Calu3 (cell line): ENCODE measurements at regions of chr20 and their contacts with region 1.

Region 1: GRCh38 chr20:61138566-61138965 is 113.5 kb upstream of the CDH4 start:
- DNase-seq: no peak
- H3K4me3 Mint-ChIP-seq: no peak overlapping the region
- H3K27ac Mint-ChIP-seq: no peak overlapping the region
- H3K4me1 Mint-ChIP-seq: no peaks in the 10 kb centered on the region
- H3K27me3 Mint-ChIP-seq: peaks cover 39% of the 10 kb centered on the region
- CTCF ChIP-seq: no peak

Region 2: GRCh38 chr20:61054411-61054810 is 84.2 kb before region 1 on chr20:
- CTCF ChIA-PET with region 1: interaction called, 11 read pairs
- intact Hi-C with region 1: no loop called
- DNase-seq: no peak
- H3K4me3 Mint-ChIP-seq: no peak overlapping the region
- H3K27ac Mint-ChIP-seq: no peak overlapping the region
- H3K4me1 Mint-ChIP-seq: no peaks in the 10 kb centered on the region
- H3K27me3 Mint-ChIP-seq: no peaks in the 10 kb centered on the region
- CTCF ChIP-seq: no peak